HepG2 (cell line): ENCODE measurements at regions of chr12 and their contacts with region 1.

Region 1: GRCh38 chr12:46372544-46373110 is at the start of gene SLC38A2:
- DNase-seq: peak; percentile 84
- ATAC-seq: peak; percentile 86
- H3K4me3 ChIP-seq: peak within 1 kb of the TSS; percentile 84 to 96 (median 94)
- H3K27ac ChIP-seq: peak within 1 kb of the TSS; percentile 97
- H3K4me1 ChIP-seq: peaks cover 56% of the 10 kb centered on the region
- H3K27me3 ChIP-seq: peaks cover 0 to 3% of the 10 kb centered on the region in 2 experiments; a peak in 2 of 5 replicates
- CTCF ChIP-seq: no peak
- EP300 ChIP-seq: peak in 1 of 2 experiments; percentile 60; a peak in 2 of 4 replicates
- POLR2A ChIP-seq: peak; percentile 100
- RAD21 ChIP-seq: no peak; the same call in 1 of the 2 replicates
- total RNA-seq, gene SLC38A2: 230 and 368 TPM in 2 replicates

Region 2: DNA sequence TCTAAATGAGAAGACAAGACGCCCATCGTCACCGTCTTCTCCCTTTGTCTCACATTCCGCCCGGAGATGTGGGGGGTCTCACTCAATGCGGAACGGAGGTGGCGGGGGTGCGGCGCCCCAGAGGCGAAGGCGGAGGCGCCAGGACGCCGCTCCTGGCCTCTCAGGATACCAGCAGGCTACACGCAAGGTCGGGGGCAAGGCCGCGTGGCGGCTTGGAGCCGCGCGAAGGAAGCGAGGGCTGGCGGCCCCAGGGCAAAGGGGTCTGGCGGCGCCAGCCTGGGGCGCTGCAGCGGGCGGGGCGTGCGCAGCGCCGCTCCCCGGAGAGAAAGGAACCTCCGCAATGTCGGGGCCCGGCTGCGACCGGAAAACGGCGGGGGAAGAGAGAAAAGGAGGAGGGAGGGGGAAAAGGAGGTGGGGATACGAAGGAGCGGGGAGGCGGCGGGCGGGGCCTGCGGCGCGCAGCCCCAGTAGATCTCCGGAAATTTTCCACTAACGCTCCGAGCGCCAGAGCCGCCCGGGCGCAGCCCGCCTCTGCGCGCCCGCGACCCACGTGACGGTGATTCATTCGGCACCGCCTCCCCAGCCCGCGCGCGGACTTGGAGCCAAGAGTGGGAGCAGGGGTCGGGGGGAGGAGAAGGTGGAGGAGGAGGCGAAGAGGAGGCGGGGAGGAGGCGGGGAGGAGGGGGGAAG is 10.5 kb after region 1 on chr12:
- CTCF ChIA-PET with region 1: no interaction called
- POLR2A ChIA-PET with region 1: interaction called, 91 read pairs
- in situ Hi-C with region 1: no loop called
- intact Hi-C with region 1: loop called (anchors 1 kb)
- DNase-seq: peak; percentile 93
- ATAC-seq: peak; percentile 87
- H3K4me3 ChIP-seq: peak overlapping the region; percentile 67 to 90 (median 73); a peak in 5 of 6 replicates
- H3K27ac ChIP-seq: peak overlapping the region; percentile 98
- H3K4me1 ChIP-seq: peaks cover 68% of the 10 kb centered on the region
- H3K27me3 ChIP-seq: no peaks in the 10 kb centered on the region; a peak in 1 of 5 replicates
- CTCF ChIP-seq: peak; percentile 60
- EP300 ChIP-seq: peak; percentile 39 to 86; a peak in 2 of 4 replicates
- POLR2A ChIP-seq: peak in 1 of 2 experiments; percentile 65; a peak in 2 of 4 replicates
- RAD21 ChIP-seq: peak; percentile 72

Region 3: GRCh38 chr12:46473634-46474329 is 101.2 kb after region 1 on chr12:
- CTCF ChIA-PET with region 1: no interaction called
- POLR2A ChIA-PET with region 1: interaction called, 8 read pairs
- in situ Hi-C with region 1: no loop called
- intact Hi-C with region 1: loop called (anchors 5 kb)
- DNase-seq: peak; percentile 95
- ATAC-seq: peak; percentile 97
- H3K4me3 ChIP-seq: peak overlapping the region; percentile 14 to 40 (median 17); a peak in 4 of 6 replicates
- H3K27ac ChIP-seq: peak overlapping the region; percentile 89
- H3K4me1 ChIP-seq: peaks cover 93% of the 10 kb centered on the region
- H3K27me3 ChIP-seq: no peaks in the 10 kb centered on the region
- CTCF ChIP-seq: no peak
- EP300 ChIP-seq: peak in 1 of 2 experiments; percentile 98; a peak in 2 of 4 replicates
- POLR2A ChIP-seq: no peak
- RAD21 ChIP-seq: no peak

Region 4: DNA sequence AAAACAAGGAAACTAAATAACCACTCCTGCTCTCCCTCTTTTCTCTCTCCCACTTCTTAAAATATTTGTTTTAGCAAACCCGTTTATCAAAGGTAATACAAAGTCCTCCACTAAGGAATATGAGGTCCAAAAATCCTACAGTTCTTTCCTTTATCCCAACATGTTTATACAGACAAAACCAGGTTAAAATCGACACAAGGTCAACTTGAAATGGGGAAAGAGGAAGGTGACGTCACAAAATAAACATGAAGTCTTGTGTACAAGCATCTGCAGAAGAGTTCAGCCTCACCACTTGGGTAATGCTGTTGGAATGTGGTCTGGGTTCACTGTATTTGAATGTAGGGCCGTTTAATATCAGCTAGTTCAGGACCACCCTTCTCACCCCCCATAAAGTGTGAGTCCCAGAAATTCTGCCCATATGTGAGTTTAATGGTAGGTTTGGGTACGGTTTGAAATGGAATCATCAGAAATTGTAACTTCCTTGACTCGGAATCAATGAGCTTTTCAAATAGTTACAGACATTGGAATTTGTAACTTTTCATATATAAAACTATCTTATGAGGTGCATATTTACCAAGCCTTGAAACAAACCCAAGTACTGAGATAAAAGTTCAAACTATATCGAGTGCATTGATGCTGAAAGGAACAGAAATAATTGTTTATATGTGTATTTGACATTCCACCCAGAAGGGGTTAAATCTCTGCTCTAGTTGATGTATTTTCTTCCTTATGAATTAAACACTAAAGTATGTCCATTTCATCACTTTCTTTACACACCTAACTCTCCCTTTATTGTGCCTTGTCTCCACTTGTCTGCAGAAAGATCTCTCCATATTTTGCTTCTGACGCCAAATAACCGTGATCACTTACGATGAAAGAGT is 120.1 kb after region 1 on chr12:
- CTCF ChIA-PET with region 1: no interaction called
- POLR2A ChIA-PET with region 1: interaction called, 47 read pairs
- in situ Hi-C with region 1: loop called (anchors 5 kb)
- intact Hi-C with region 1: loop called (anchors 1 kb)
- DNase-seq: peak; percentile 100
- ATAC-seq: peak; percentile 89
- H3K4me3 ChIP-seq: peak overlapping the region in 2 of 3 experiments; percentile 39 to 45; a peak in 3 of 6 replicates
- H3K27ac ChIP-seq: peak overlapping the region; percentile 96
- H3K4me1 ChIP-seq: peaks cover 81% of the 10 kb centered on the region
- H3K27me3 ChIP-seq: no peaks in the 10 kb centered on the region
- CTCF ChIP-seq: 0 out of 2 replicates have a peak, but pooled peaks have one; percentile 6
- EP300 ChIP-seq: peak; percentile 96 to 100
- POLR2A ChIP-seq: peak in 1 of 2 experiments; percentile 38; a peak in 1 of 4 replicates
- RAD21 ChIP-seq: 0 out of 2 replicates have a peak, but pooled peaks have one; percentile 8

Region 5: DNA sequence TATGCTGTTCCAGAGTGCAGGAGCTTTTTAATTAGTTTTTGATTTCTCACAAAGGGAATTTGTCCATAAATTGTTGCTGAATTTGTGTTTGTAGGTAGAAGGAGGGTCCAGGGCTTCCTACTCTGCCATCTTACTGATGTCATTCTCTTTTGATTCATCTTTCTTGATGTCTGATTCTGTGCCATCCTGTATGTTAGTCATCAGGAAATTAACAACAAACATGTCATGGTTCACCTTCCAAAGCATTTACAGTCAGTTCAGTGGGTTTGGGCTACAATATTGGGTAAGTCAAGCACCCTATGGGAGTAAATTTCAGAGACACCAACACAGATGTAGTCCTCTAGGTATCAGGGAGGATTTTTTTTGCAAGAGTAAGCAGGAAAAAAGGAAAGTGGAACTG is 135.1 kb after region 1 on chr12:
- CTCF ChIA-PET with region 1: no interaction called
- POLR2A ChIA-PET with region 1: no interaction called
- in situ Hi-C with region 1: no loop called
- intact Hi-C with region 1: no loop called
- DNase-seq: no peak
- ATAC-seq: no peak
- H3K4me3 ChIP-seq: no peak overlapping the region
- H3K27ac ChIP-seq: no peak overlapping the region
- H3K4me1 ChIP-seq: peaks cover 4% of the 10 kb centered on the region
- H3K27me3 ChIP-seq: no peaks in the 10 kb centered on the region
- CTCF ChIP-seq: no peak
- EP300 ChIP-seq: no peak
- POLR2A ChIP-seq: no peak
- RAD21 ChIP-seq: no peak

Region 6: GRCh38 chr12:46577063-46577776 is 204.6 kb after region 1 on chr12:
- CTCF ChIA-PET with region 1: no interaction called
- POLR2A ChIA-PET with region 1: interaction called, 11 read pairs
- in situ Hi-C with region 1: no loop called
- intact Hi-C with region 1: no loop called
- DNase-seq: peak; percentile 89
- ATAC-seq: peak; percentile 90
- H3K4me3 ChIP-seq: no peak overlapping the region
- H3K27ac ChIP-seq: peak overlapping the region; percentile 77
- H3K4me1 ChIP-seq: peaks cover 69% of the 10 kb centered on the region
- H3K27me3 ChIP-seq: no peaks in the 10 kb centered on the region
- CTCF ChIP-seq: no peak
- EP300 ChIP-seq: peak in 1 of 2 experiments; percentile 84; a peak in 2 of 4 replicates
- POLR2A ChIP-seq: no peak
- RAD21 ChIP-seq: no peak

Region 7: DNA sequence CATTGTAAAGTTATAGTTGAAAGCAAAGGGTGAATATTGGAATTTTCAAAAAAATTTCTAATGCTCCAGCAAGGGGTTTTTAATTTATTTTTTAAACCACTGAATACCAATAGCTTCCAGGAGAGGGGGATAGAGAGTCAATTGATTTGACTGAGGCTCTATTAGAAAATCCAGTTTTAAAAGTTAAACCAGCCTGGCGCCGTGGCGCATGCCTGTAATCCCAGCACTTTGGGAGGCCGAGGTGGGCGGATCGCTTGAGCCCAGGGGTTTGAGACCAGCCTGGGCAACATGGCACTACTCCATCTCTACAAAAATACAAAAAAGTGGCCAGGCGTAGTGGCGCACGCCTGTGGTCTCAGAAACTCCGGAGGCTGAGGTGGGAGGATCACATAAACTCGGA is 303.1 kb after region 1 on chr12:
- CTCF ChIA-PET with region 1: no interaction called
- POLR2A ChIA-PET with region 1: no interaction called
- in situ Hi-C with region 1: no loop called
- intact Hi-C with region 1: loop called (anchors 5 kb)
- DNase-seq: peak; percentile 30
- ATAC-seq: no peak
- H3K4me3 ChIP-seq: no peak overlapping the region
- H3K27ac ChIP-seq: no peak overlapping the region
- H3K4me1 ChIP-seq: peaks cover 26% of the 10 kb centered on the region
- H3K27me3 ChIP-seq: no peaks in the 10 kb centered on the region
- CTCF ChIP-seq: peak; percentile 30; the same call in 1 of the 2 replicates
- EP300 ChIP-seq: no peak
- POLR2A ChIP-seq: no peak
- RAD21 ChIP-seq: peak; percentile 45